Psoas muscle (tissue), 8 donors: ENCODE measurements at regions of chr15 and their contacts with region 1.

Region 1: DNA sequence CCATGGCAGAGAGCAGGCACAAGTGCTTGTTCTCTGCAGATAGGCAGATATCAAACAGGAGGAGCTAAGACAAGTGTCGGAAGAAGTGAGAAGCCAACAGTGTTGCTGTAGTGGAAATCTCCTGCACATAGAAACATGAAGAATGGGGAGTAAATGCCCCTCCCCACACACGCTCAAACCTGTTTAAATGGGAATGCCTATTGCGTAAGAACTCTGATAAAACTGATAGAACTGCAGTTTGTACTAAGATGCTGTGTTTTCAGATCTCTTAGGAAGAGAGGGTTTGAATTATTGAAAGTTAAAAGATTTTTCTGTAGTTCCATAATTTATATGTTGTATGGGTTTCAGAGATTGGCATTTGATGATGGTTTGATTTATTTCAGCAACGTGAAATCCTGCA is 19.6 kb downstream of the EIF2AK4 start:
- DNase-seq: no peak
- ATAC-seq: no peak
- H3K4me3 ChIP-seq: no peak overlapping the region
- H3K27ac ChIP-seq: no peak overlapping the region
- H3K4me1 ChIP-seq: no peaks in the 10 kb centered on the region
- H3K27me3 ChIP-seq: no peaks in the 10 kb centered on the region
- CTCF ChIP-seq: no peak

Region 2: DNA sequence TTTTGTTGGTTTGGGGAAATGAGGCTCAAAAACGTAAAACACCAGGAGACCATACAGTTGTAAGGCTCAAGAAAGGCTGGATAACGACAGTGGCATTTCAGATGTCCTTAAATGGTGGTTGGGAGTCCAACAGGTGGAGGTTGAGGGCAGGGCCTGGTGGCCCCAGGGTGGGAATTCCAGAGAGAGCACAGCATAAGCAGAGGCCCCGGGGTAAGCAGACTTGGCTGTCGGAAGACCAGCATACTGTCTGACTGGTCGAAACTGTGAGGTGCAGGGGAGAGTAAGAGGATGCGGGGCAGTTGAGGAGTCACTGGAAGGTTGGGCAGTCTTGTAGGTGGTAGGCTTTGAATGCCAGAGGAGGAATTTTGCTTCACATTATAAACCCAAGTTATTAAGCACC is 37.2 kb after region 1 on chr15:
- intact Hi-C with region 1: loop called in 1 of 2 experiments (anchors 5 kb)
- DNase-seq: no peak
- ATAC-seq: no peak
- H3K4me3 ChIP-seq: no peak overlapping the region
- H3K27ac ChIP-seq: no peak overlapping the region
- H3K4me1 ChIP-seq: no peaks in the 10 kb centered on the region
- H3K27me3 ChIP-seq: no peaks in the 10 kb centered on the region
- CTCF ChIP-seq: no peak